ENCODE measurements at regions of chr14 and their contacts with region 1.

Region 1: GRCh38 chr14:102316743-102317563 is 2.6 kb upstream of the ZNF839 start:
- DNase-seq: peak; percentile 98
- H3K4me3 ChIP-seq: peak overlapping the region; percentile 35 to 73 (median 52)
- H3K27ac ChIP-seq: peak overlapping the region; percentile 40 to 96 (median 88)
- H3K4me1 ChIP-seq: peaks cover 17 to 79% (median 62%) of the 10 kb centered on the region in 6 donors
- H3K27me3 ChIP-seq: no peaks in the 10 kb centered on the region
- CTCF ChIP-seq: peak; percentile 80 to 98 (median 94)
- POLR2A ChIP-seq: peak in 1 of 3 donors; percentile 26

Region 2: DNA sequence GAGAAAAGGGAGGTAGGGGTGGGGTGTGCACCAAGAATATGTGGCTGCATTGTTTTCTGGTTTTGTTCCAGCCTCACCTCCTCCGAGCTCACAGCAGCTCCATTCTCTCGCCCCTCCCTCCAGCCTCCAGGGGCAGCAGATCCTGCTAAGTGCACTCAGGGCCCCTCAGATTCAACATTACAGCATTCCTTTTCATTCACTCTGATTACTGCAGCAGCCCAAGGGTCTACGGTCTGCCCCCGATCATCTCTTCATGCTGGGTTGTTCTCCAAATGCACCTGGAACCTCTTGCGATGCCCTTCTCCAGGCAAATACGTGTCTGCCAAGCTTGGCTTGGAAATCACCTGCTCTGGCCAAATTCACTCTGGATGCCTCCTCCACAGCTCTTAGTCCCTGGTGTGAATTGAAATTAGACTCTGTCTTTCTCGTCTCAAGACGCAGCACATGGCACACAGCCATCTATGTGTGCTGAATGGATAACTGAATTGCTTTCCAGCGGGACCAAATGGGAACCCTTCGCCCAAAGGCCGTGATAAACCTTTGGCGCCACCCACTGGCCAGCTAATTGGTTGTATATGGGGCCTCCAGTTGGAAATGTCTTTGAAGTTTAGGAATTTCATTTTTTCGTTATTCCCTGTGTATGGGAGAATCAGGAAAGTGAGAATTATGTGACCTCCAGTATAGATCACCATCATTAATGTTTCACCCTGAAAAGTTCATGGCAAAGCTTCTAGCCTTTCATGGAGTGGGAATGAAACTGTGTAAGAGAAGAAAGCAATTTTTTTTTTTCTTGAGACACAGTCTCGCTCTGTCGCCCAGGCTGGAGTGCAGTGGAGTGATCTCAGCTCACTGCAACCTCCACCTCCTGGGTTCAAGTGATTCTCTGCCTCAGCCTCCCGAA is 220.5 kb before region 1 on chr14:
- intact Hi-C with region 1: loop called (anchors 10 kb)
- DNase-seq: peak; percentile 90
- H3K4me3 ChIP-seq: no peak overlapping the region
- H3K27ac ChIP-seq: no peak overlapping the region
- H3K4me1 ChIP-seq: peaks cover 0 to 8% (median 6%) of the 10 kb centered on the region in 6 donors
- H3K27me3 ChIP-seq: no peaks in the 10 kb centered on the region
- CTCF ChIP-seq: peak; percentile 57 to 84 (median 80)
- POLR2A ChIP-seq: no peak

Region 3: GRCh38 chr14:102220031-102220430 is 96.9 kb before region 1 on chr14:
- intact Hi-C with region 1: no loop called
- DNase-seq: peak; percentile 86
- H3K4me3 ChIP-seq: no peak overlapping the region
- H3K27ac ChIP-seq: no peak overlapping the region
- H3K4me1 ChIP-seq: peaks cover 0 to 38% (median 23%) of the 10 kb centered on the region in 6 donors
- H3K27me3 ChIP-seq: no peaks in the 10 kb centered on the region
- CTCF ChIP-seq: no peak
- POLR2A ChIP-seq: no peak

Region 4: DNA sequence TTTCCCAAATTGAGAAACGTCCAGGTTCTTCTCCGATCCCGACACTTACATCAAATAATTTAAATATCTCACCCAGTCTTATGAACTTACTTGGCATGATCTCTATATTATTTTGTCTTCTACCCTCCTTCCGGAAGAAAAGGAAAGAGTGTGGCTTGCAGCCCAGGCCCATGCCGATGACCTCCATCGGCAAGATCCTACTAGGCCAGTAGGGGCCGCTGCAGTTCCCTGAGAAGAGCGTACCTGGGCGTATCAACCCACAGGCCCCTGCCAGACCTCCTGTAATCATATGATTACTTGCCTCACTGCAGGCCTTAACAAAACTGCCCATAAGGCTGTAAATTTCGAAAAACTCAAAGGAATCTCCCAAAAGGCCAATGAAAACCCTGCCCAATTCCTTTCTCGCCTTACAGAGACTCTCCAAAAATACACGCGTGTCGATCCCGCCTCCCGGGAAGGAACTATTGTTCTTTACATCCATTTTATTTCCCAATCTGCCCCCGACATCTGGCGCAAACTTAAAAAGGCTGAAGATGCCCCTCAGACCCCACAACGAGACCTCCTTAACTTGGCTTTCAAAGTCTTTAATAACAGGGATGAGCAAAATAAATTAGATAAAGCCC is 81.6 kb before region 1 on chr14:
- intact Hi-C with region 1: loop called (anchors 10 kb)
- DNase-seq: peak; percentile 90
- H3K4me3 ChIP-seq: peak overlapping the region in 3 of 8 donors; percentile 12 to 48 (median 21)
- H3K27ac ChIP-seq: peak overlapping the region in 4 of 8 donors; percentile 9 to 50 (median 30)
- H3K4me1 ChIP-seq: peaks cover 0 to 11% (median 8%) of the 10 kb centered on the region in 6 donors
- H3K27me3 ChIP-seq: no peaks in the 10 kb centered on the region
- CTCF ChIP-seq: peak; percentile 48 to 89 (median 80)
- POLR2A ChIP-seq: no peak

Measured in spleen (tissue), 13 donors.